GM10248 (cell line): ENCODE measurements at regions of chr9 and their contacts with region 1.

Region 1: GRCh38 chr9:124852829-124853531 is at the start of gene WDR38:
- DNase-seq: peak; percentile 89
- CTCF ChIP-seq: peak; percentile 97

Region 2: GRCh38 chr9:124617471-124618141 is 235.4 kb before region 1 on chr9:
- CTCF ChIA-PET with region 1: interaction called, 20 read pairs
- POLR2A ChIA-PET with region 1: no interaction called
- DNase-seq: peak; percentile 72
- CTCF ChIP-seq: peak; percentile 90

Region 3: GRCh38 chr9:124697326-124698200 is 155.4 kb before region 1 on chr9:
- CTCF ChIA-PET with region 1: no interaction called
- POLR2A ChIA-PET with region 1: no interaction called
- DNase-seq: no peak
- CTCF ChIP-seq: no peak

Region 4: DNA sequence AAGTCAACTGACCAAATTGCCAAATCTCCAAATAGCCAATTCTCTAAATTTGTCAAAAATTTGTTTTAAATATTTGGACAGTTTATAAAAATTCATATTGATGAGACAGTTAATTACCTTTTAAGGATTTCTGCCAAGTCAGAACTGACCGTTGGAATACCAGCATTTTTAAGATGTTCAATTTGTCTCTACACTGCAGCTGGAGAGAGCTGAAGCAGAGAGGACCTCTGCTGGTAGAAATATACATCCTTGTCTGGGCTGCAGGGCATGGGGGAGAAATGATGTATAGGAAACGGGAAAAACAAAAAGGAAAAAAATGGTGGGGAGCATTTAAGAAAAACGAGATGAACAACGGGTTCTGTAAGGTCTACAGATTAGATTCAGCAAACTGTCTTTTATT is 98.7 kb before region 1 on chr9:
- CTCF ChIA-PET with region 1: interaction called, 12 read pairs
- POLR2A ChIA-PET with region 1: no interaction called
- DNase-seq: no peak
- CTCF ChIP-seq: peak; percentile 40

Region 5: GRCh38 chr9:124800306-124801259 is 52.4 kb before region 1 on chr9:
- CTCF ChIA-PET with region 1: interaction called, 155 read pairs
- POLR2A ChIA-PET with region 1: no interaction called
- DNase-seq: peak; percentile 61
- CTCF ChIP-seq: no peak

Region 6: DNA sequence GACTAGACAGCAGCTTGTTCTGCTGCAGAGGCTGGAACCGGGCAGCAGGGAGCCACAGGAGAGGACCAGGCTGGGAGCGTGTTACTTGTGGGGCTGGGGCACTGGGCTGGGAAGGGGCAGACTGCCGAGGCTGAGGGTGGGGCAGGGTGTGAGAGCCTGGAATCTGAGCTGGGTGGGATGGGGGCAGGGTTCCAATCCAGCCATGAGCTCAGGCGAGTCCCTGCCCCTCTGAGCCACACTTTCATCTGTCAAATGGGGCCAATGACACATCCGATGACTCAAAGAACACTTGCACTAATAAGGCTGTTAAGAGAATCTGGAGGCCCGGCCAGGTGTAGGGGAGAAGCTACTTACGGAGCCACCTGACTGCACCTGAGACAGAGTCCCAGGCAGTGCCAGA is 18.4 kb before region 1 on chr9:
- CTCF ChIA-PET with region 1: interaction called, 172 read pairs
- POLR2A ChIA-PET with region 1: no interaction called
- DNase-seq: no peak
- CTCF ChIP-seq: no peak

Region 7: GRCh38 chr9:124894741-124895170 is 41.8 kb after region 1 on chr9:
- CTCF ChIA-PET with region 1: interaction called, 21 read pairs
- POLR2A ChIA-PET with region 1: interaction called, 6 read pairs
- DNase-seq: no peak
- CTCF ChIP-seq: peak; percentile 59

Region 8: GRCh38 chr9:125593585-125594229 is 740.7 kb after region 1 on chr9:
- CTCF ChIA-PET with region 1: no interaction called
- POLR2A ChIA-PET with region 1: no interaction called
- DNase-seq: no peak
- CTCF ChIP-seq: no peak